Vagina (tissue), 2 donors: ENCODE measurements at regions of chr22 and their contacts with region 1.

Region 1: DNA sequence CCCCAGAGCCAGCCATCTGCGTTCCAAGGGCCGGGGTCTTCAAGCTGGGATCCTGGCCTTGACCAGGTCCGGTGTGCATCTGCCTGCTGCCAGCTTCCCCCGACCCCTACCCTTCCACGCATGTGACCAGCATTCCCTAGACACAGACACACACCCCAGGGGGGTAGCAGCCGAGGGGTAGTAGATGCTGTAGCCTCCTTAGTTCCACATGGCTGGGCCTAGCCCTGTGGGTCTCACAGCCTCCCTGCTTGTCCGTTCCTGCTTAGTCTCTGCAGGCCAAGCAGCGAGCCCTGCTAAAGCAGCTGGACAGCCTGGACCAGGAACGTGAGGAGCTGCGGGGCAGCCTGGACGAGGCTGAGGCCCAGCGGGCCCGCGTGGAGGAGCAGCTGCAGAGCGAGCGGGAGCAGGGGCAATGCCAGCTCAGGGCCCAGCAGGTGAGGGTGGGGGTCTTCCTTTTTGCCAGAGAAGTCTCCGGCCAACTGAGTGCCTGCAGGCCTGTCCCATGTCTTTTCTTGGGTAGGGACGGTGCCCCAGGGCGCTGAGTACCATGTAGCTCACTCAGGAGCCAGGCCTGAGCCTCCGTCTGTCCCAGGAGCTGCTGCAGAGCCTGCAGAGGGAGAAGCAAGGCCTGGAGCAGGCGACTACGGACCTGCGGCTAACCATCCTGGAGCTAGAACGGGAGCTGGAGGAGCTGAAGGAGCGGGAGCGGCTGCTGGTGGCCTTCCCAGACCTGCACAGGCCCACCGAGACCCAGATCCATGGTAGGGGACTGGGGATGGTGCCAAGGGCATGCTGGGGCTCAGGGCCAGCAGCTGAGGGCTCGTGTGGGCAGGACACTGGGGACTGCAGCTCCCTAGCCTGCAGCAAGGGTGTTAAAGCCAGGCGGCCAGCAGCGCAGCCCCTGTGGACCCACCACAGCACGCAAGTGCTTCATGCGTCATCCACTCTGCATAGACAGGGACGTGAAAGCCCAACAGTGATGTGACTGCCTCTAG is 13.6 kb downstream of the RNF215 start:
- DNase-seq: no peak
- H3K4me3 ChIP-seq: no peak overlapping the region
- H3K27ac ChIP-seq: no peak overlapping the region
- H3K4me1 ChIP-seq: no peaks in the 10 kb centered on the region
- H3K27me3 ChIP-seq: no peaks in the 10 kb centered on the region
- CTCF ChIP-seq: no peak
- POLR2A ChIP-seq: no peak

Region 2: DNA sequence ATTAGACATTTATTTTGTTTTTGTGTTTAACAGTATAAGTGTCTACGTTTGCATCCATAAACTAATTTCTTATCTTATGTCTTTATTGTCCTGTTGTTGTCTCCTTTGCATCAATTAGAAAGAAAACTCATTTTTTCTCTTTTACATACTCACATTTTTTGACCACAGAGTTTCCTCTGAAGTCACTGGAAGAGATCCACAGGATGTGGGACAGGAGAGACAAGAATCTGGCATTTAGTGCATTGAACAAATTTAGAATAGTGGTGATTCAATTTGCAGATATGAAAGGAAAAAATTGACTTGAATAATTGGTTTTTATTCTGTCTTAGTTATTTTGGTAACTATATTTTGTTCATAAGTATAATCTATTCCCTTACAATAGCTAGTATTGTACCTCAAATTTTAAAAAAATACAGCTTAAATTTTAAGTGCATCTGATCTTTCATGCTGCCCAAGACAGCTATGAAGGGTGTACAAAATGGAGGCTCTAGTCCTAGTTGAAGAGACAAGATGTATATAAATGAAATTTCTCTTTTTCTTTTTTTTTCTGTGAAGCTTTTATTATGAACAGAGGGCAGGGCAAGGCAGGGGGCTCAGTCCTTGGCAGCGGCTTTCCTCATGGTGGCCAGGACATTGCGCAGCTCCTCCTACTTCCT is 269.0 kb before region 1 on chr22:
- intact Hi-C with region 1: loop called (anchors 10 kb)
- DNase-seq: no peak
- H3K4me3 ChIP-seq: no peak overlapping the region
- H3K27ac ChIP-seq: no peak overlapping the region
- H3K4me1 ChIP-seq: no peaks in the 10 kb centered on the region
- H3K27me3 ChIP-seq: no peaks in the 10 kb centered on the region
- CTCF ChIP-seq: no peak
- POLR2A ChIP-seq: no peak

Region 3: GRCh38 chr22:30423301-30423981 is 49.8 kb after region 1 on chr22:
- intact Hi-C with region 1: no loop called
- DNase-seq: peak in 1 of 2 donors; percentile 93
- H3K4me3 ChIP-seq: peak overlapping the region; percentile 56 to 76
- H3K27ac ChIP-seq: peak overlapping the region; percentile 94
- H3K4me1 ChIP-seq: peaks cover 42% of the 10 kb centered on the region
- H3K27me3 ChIP-seq: no peaks in the 10 kb centered on the region
- CTCF ChIP-seq: peak in 1 of 3 experiments; percentile 19
- POLR2A ChIP-seq: peak in 1 of 2 donors; percentile 89

Region 4: DNA sequence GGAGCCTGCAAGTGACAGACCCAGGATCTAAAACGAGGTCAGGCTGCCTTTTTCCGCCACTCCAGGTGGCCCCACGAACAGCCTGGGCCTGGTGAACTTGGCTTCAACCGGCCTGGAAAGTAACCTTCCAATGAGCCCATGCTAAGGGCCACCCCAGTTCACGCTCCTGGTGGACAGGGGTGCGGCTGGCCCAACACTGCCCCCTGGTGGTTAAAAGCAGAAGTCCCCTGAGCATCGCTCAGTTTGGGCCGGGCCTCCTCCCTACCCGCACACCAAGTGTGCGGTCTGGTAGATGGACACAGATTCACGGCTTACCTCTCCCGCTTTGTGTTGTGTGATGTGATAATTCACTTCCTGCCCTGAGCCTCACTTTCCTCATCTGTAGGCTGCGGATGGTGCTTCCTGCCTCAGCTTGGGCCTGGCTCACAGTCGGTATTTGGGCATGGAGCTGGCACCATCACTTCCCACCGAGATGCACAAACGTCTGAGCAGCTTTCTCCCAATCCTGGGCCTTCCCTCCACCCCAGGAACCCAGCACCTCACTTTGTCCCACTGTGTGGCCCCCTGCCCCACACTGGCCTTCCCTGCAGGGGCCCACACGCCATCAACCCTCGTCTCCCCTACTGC is 111.8 kb after region 1 on chr22:
- intact Hi-C with region 1: no loop called
- DNase-seq: no peak
- H3K4me3 ChIP-seq: no peak overlapping the region
- H3K27ac ChIP-seq: no peak overlapping the region
- H3K4me1 ChIP-seq: no peaks in the 10 kb centered on the region
- H3K27me3 ChIP-seq: no peaks in the 10 kb centered on the region
- CTCF ChIP-seq: peak; percentile 83 to 93 (median 88)
- POLR2A ChIP-seq: no peak